ENCODE measurements at regions of chr12 and their contacts with region 1.

Region 1: GRCh38 chr12:116360579-116361413 is 83.3 kb upstream of the MED13L start:
- DNase-seq: no peak
- H3K4me3 ChIP-seq: no peak overlapping the region
- H3K27ac ChIP-seq: no peak overlapping the region
- H3K4me1 ChIP-seq: peaks cover 10% of the 10 kb centered on the region
- H3K27me3 ChIP-seq: no peaks in the 10 kb centered on the region
- CTCF ChIP-seq: no peak

Region 2: GRCh38 chr12:116076399-116076798 is 284.4 kb before region 1 on chr12:
- CTCF ChIA-PET with region 1: no interaction called
- dilution Hi-C with region 1: no loop called
- in situ Hi-C with region 1: no loop called
- intact Hi-C with region 1: no loop called
- DNase-seq: peak; percentile 37
- H3K4me3 ChIP-seq: no peak overlapping the region
- H3K27ac ChIP-seq: no peak overlapping the region
- H3K4me1 ChIP-seq: peaks cover 9% of the 10 kb centered on the region
- H3K27me3 ChIP-seq: no peaks in the 10 kb centered on the region
- CTCF ChIP-seq: no peak

Region 3: DNA sequence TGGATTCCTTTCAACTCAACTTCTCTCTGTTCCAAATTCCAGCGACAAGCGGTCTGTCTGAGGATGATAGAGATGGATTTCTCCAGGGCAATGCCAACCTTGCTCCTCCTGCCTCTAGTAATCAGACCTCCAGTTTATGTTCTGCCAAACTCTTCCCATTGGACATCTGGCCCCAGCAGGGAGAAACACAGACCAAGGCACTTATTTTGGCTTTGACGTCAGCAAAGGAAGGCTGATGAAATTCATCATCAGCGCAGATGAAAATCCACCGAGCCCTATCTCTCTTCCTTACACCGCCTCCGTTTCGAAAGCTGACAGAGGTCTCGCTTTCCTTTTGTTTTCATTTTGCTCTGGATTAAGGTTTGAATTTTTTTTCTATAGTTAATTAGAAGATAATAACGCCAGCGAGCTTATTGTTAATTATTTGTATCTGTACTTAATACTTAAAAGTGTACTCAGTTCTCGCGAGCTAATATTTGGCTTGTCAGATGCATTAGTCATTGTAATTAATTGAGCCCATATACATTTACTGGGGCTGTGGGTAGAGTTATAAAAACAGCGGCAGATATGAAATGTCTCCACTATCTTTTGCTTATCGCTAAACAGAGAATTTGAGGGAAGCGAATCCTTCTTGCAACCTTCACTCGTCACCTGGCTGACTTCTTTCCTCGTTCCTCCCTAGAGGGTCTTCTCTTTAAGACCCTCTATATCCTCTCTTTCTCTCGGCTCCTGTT is 47.4 kb before region 1 on chr12:
- CTCF ChIA-PET with region 1: no interaction called
- dilution Hi-C with region 1: no loop called
- in situ Hi-C with region 1: no loop called
- intact Hi-C with region 1: loop called (anchors 1 kb)
- DNase-seq: no peak
- H3K4me3 ChIP-seq: no peak overlapping the region
- H3K27ac ChIP-seq: no peak overlapping the region
- H3K4me1 ChIP-seq: peaks cover 4% of the 10 kb centered on the region
- H3K27me3 ChIP-seq: no peaks in the 10 kb centered on the region
- CTCF ChIP-seq: no peak

Measured in mammary epithelial cell (primary cell).